ENCODE measurements at regions of chr14 and their contacts with region 1.

Region 1: GRCh38 chr14:100192672-100193416 is 33.4 kb upstream of the DEGS2 start:
- DNase-seq: peak; percentile 99
- ATAC-seq: peak; percentile 99
- H3K4me3 ChIP-seq: peak overlapping the region; percentile 66
- H3K27ac ChIP-seq: peak overlapping the region; percentile 38
- H3K4me1 ChIP-seq: peaks cover 12% of the 10 kb centered on the region
- H3K27me3 ChIP-seq: no peaks in the 10 kb centered on the region
- CTCF ChIP-seq: peak; percentile 76

Region 2: DNA sequence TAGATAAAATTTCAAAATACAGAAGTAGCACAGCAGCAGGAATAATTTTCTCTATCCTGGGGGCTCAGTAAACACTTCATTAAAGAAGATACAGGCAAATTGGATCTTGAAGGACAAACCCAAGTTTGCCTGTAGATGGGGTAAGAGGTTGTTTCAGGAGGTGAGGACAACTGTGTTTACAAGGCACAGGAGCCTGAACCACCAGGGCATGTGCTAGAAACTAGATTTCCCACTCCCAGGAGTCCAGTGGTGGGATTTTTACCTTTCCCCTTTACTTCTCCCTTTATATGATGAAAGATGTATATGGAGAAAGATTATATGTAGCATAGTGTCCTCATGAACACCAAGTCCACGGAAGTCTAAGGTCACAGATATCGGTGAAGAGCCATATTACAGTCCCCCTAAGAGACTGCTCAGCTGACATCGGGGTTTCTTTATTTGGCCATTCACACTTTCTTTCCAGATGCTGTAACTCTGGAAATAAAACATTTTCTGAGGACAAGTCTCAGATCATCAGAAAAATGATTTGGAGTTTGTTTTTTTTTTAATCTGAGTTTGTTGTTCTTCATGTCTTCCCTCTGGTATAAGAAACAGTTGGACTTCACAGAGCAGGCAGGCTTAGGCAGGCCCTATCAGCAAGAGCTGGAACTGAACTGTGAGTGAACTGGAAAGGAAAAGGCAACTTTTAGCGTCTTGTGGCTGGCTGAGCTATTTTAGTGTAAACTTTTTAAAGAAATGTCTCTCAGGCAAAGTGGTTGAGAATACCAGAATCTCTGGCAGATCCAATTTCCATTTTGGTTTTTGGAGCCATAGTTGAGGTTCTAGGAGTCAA is 135.7 kb before region 1 on chr14:
- CTCF ChIA-PET with region 1: no interaction called
- POLR2A ChIA-PET with region 1: no interaction called
- intact Hi-C with region 1: loop called (anchors 5 kb)
- DNase-seq: peak; percentile 51
- ATAC-seq: peak; percentile 27; the same call in 1 of the 2 replicates
- H3K4me3 ChIP-seq: no peak overlapping the region
- H3K27ac ChIP-seq: no peak overlapping the region
- H3K4me1 ChIP-seq: peaks cover 21% of the 10 kb centered on the region
- H3K27me3 ChIP-seq: no peaks in the 10 kb centered on the region
- CTCF ChIP-seq: peak; percentile 61

Region 3: DNA sequence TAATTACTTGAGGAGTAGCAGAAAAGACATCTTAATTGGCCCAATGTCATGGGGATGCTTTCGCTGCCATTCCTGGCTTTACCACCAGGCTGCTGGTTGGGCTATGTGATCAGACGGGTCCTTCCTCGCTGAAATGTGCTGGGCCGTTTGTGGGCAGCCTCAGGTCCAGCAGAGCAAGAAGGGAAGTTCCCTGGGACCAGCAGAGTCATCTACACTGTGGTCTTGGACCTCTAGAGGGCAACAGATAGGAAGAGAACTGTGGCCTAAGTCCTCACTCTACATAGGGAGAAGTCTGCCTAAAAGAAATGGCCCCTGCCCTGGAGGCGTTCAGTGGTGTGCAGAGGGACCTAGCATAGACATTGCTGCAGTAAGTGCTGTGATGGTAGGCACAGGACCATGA is 116.7 kb before region 1 on chr14:
- CTCF ChIA-PET with region 1: interaction called, 4 read pairs
- POLR2A ChIA-PET with region 1: no interaction called
- intact Hi-C with region 1: loop called (anchors 2 kb)
- DNase-seq: peak; percentile 34
- ATAC-seq: peak; percentile 61
- H3K4me3 ChIP-seq: no peak overlapping the region
- H3K27ac ChIP-seq: no peak overlapping the region
- H3K4me1 ChIP-seq: peaks cover 15% of the 10 kb centered on the region
- H3K27me3 ChIP-seq: no peaks in the 10 kb centered on the region
- CTCF ChIP-seq: peak; percentile 40; the same call in 1 of the 2 replicates